ENCODE measurements at regions of chr1 and their contacts with region 1.

Region 1: GRCh38 chr1:204941421-204942338 is 71.0 kb downstream of the NFASC start:
- DNase-seq: peak; percentile 4
- H3K4me3 ChIP-seq: no peak overlapping the region
- H3K27me3 ChIP-seq: no peaks in the 10 kb centered on the region; the same call in 1 of the 2 replicates
- CTCF ChIP-seq: peak; percentile 97

Region 2: DNA sequence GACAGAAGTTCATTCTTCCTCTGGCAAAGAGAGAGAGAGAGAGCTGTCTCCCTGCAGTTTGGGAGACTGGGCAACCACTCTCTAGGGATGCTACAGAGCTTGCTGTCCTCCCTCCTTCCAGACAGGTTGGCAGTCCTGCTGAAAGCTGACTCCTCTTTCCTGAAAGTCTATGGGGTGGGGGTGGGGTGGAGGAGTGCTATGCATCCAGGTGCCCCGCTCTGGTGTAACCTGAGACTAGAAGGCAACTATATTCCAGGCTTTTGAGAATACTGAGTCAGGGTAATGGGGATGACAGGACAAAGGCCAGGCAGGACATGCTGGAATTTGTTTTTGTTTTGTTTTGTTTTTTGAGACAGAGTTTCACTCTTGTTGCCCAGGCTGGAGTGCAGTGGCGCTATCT is 1392.4 kb before region 1 on chr1:
- CTCF ChIA-PET with region 1: no interaction called
- POLR2A ChIA-PET with region 1: no interaction called
- DNase-seq: no peak
- H3K4me3 ChIP-seq: no peak overlapping the region
- H3K27me3 ChIP-seq: no peaks in the 10 kb centered on the region
- CTCF ChIP-seq: no peak

Region 3: GRCh38 chr1:204565617-204566582 is 375.8 kb before region 1 on chr1:
- CTCF ChIA-PET with region 1: interaction called, 15 read pairs
- POLR2A ChIA-PET with region 1: no interaction called
- DNase-seq: peak; percentile 16
- H3K4me3 ChIP-seq: no peak overlapping the region
- H3K27me3 ChIP-seq: no peaks in the 10 kb centered on the region
- CTCF ChIP-seq: peak; percentile 65

Region 4: DNA sequence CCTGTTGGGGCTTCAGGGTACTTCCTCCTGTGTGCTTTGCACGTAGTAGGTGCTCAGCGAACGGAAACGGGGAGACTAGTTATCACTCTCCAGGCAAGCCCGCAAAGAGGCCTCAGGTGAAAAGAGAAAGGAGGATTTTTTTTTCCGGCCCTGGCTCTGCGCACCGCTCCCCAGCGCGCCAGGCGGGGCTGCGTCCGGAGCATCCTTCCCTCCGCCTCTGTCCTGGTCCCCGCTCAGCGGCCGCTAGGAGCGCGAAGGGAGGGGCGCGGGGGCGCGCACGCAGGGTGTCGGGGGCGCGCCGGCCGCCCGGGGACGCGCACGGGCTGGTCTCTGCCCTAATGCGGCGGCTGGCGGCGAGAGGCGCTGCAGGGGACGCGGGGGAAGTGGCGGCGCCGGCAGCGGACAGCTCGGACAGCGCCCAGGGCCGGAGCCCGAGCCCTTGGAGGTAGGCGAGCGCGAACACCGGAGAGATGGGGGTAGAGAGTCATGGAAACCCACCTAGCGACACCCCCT is 113.3 kb before region 1 on chr1:
- CTCF ChIA-PET with region 1: interaction called, 40 read pairs
- POLR2A ChIA-PET with region 1: no interaction called
- DNase-seq: no peak
- H3K4me3 ChIP-seq: peak overlapping the region; percentile 74
- H3K27me3 ChIP-seq: peaks cover 6% of the 10 kb centered on the region
- CTCF ChIP-seq: 0 out of 2 replicates have a peak, but pooled peaks have one; percentile 12

Region 5: DNA sequence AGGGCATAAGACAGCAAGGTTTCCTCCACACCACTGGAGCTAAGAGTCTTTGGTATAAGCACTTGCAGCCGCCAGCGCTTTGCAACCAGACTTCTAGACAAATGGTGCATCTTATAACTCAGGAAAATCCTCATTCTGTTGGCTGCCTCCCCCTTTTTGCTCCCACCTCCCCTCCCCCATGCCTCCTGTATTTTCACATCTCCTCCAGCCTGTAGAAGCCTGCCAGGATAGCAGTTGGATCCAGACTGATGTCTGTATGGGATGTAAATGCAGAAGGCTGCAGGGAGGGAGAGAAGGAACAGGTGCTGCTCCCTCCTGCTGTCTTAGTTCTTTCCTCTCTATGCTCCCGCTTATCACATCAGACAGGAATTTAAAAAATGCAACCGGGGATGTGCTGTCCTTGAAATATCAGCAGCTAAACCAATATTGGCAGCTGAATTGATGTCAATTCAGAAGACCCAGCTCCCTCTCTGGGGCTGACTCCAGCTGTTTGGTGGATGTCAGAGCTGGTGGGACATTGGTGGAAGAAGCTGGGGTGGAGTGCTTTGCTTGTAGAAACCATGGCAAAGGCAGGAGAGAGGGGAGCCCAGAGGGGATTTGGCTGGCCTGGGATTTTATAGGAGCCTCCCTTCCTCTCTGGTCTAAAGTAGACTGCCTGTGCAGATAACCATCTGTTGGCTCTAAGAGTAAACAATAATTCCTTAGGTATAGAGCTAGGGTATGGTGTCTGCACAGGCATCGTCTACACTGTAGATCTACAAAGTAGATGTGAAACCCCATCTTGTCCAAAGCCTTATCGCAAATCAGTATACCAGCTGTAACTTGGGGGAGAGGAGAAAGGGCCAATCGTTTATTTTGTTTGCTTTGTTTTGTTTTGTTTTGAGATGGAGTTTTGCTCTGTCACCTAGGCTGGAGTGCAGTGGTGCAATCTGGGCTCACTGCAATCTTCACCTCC is 17.4 kb before region 1 on chr1:
- CTCF ChIA-PET with region 1: interaction called, 24 read pairs
- POLR2A ChIA-PET with region 1: no interaction called
- DNase-seq: no peak
- H3K4me3 ChIP-seq: no peak overlapping the region
- H3K27me3 ChIP-seq: no peaks in the 10 kb centered on the region
- CTCF ChIP-seq: no peak

Region 6: GRCh38 chr1:204975570-204976235 is 34.0 kb after region 1 on chr1:
- CTCF ChIA-PET with region 1: interaction called, 12 read pairs
- POLR2A ChIA-PET with region 1: no interaction called
- DNase-seq: no peak
- H3K4me3 ChIP-seq: no peak overlapping the region
- H3K27me3 ChIP-seq: no peaks in the 10 kb centered on the region
- CTCF ChIP-seq: peak; percentile 87

Region 7: DNA sequence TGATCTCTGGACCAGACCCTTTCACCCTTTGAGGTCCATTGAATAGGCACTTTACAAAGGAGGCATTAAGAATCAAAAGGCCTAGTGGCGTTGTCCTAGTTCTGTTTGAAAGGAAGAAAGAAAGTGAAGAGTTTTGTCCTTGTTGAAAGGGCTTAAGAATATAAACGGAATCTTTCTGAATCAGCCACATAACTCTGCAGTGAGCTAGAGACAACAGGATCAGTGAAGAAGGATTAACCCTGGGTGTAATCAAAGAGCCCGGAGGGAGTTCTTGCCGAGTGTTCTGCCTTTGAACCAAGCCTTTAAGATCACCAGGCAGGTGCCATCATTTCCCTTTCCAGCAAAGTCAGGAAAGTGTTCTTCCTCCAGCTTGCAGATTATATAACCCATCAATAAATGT is 46.5 kb after region 1 on chr1:
- CTCF ChIA-PET with region 1: no interaction called
- POLR2A ChIA-PET with region 1: no interaction called
- DNase-seq: no peak
- H3K4me3 ChIP-seq: no peak overlapping the region
- H3K27me3 ChIP-seq: no peaks in the 10 kb centered on the region
- CTCF ChIP-seq: no peak

Measured in BJ (cell line).